ENCODE measurements at regions of chr6 and their contacts with region 1.

Region 1: GRCh38 chr6:77466055-77466450 is 2.8 kb upstream of the HTR1B start:
- DNase-seq: peak; percentile 76
- H3K4me3 Mint-ChIP-seq: peak overlapping the region; percentile 71
- H3K27ac Mint-ChIP-seq: peak overlapping the region; percentile 2
- H3K4me1 Mint-ChIP-seq: peaks cover 7% of the 10 kb centered on the region
- H3K27me3 Mint-ChIP-seq: no peaks in the 10 kb centered on the region
- CTCF ChIP-seq: peak; percentile 82

Region 2: DNA sequence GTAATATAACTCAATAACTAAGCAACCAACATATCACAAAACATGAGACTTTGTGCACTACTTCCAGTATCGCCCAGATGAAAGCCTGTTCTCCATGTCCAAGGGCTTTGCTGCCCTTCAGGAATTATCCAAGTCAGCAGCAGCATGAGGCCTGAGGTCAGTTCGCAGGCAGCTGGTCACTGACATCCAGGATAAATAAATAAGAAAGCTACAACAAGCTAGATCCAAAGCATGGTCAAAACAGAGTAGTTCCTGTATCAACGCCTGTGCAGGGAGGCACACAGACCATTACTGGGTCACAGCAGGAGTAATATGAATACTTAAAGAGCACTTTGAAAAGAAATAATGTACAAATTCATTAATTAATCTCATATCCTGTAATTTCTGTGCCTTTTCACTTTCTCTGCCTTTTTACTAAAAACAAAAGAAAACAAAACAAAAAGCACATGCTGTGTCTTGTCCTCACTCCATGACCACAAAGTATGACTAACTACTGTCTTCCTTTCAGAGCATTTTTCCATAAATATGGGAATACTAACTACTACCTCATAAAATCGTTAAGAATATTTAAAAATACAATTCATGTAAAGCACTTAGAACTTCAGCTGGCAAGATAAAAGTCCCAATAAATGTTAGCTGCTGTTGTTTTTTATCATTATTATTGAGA is 1026.4 kb after region 1 on chr6:
- CTCF ChIA-PET with region 1: no interaction called
- POLR2A ChIA-PET with region 1: no interaction called
- intact Hi-C with region 1: no loop called
- DNase-seq: peak; percentile 38
- H3K4me3 Mint-ChIP-seq: no peak overlapping the region
- H3K27ac Mint-ChIP-seq: peak overlapping the region; percentile 80
- H3K4me1 Mint-ChIP-seq: peaks cover 27% of the 10 kb centered on the region
- H3K27me3 Mint-ChIP-seq: no peaks in the 10 kb centered on the region
- CTCF ChIP-seq: no peak

Region 3: GRCh38 chr6:78835817-78836216 is 1369.8 kb after region 1 on chr6:
- CTCF ChIA-PET with region 1: interaction called, 4 read pairs
- POLR2A ChIA-PET with region 1: no interaction called
- intact Hi-C with region 1: loop called (anchors 10 kb)
- DNase-seq: peak; percentile 31
- H3K4me3 Mint-ChIP-seq: no peak overlapping the region
- H3K27ac Mint-ChIP-seq: no peak overlapping the region
- H3K4me1 Mint-ChIP-seq: no peaks in the 10 kb centered on the region
- H3K27me3 Mint-ChIP-seq: no peaks in the 10 kb centered on the region
- CTCF ChIP-seq: peak; percentile 33

Measured in MCF 10A (cell line).